Transverse colon (tissue), 4 donors: ENCODE measurements at regions of chr3 and their contacts with region 1.

Region 1: GRCh38 chr3:44510000-44510368 is 32.5 kb upstream of the ZNF445 start:
- DNase-seq: no peak
- H3K4me3 ChIP-seq: peak overlapping the region; percentile 59 to 97 (median 92)
- H3K27ac ChIP-seq: peak overlapping the region; percentile 89 to 96 (median 92)
- H3K4me1 ChIP-seq: peaks cover 6 to 27% (median 15%) of the 10 kb centered on the region in 4 donors
- H3K27me3 ChIP-seq: no peaks in the 10 kb centered on the region
- CTCF ChIP-seq: no peak
- EP300 ChIP-seq: no peak
- POLR2A ChIP-seq: no peak

Region 2: DNA sequence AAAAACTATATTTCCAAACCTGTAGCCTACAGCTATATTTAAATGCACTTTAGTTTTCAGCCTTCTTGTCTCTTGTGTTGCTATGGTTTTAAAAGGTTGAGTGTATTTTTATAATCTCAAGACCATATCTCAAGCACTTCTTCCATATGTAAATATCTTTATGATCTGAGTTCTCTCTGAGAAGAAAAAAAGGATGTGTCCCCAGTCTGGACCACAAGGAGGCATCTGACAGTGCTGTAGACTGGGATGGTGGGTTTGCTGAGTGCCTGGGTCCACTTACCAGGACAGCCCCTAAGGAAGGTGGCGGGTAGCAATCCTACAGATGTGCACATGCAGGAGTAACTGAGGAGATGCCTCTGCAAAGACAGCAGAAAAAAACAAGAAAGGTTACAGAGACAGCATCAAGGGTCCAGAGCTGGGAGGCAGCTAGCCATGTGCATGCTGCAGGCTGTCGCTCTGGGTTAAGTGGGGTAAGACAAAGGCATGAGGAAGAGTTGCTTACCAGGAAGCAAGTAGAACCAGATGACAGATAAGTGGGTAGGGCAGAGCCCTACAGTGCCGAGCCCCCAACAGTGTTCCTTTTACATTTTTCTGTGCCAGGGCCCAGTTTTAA is 1294.2 kb before region 1 on chr3:
- in situ Hi-C with region 1: no loop called
- intact Hi-C with region 1: no loop called
- DNase-seq: no peak
- H3K4me3 ChIP-seq: no peak overlapping the region
- H3K27ac ChIP-seq: no peak overlapping the region
- H3K4me1 ChIP-seq: no peaks in the 10 kb centered on the region
- H3K27me3 ChIP-seq: no peaks in the 10 kb centered on the region
- CTCF ChIP-seq: no peak
- EP300 ChIP-seq: no peak
- POLR2A ChIP-seq: no peak

Region 3: GRCh38 chr3:44477312-44478030 is 32.5 kb before region 1 on chr3 and contains the start of gene ZNF445:
- in situ Hi-C with region 1: no loop called
- intact Hi-C with region 1: loop called (anchors 5 kb)
- DNase-seq: peak; percentile 82
- H3K4me3 ChIP-seq: peak within 1 kb of the TSS; percentile 74 to 88 (median 81)
- H3K27ac ChIP-seq: peak within 1 kb of the TSS; percentile 81 to 87 (median 84)
- H3K4me1 ChIP-seq: peaks cover 5 to 29% (median 12%) of the 10 kb centered on the region in 4 donors
- H3K27me3 ChIP-seq: no peaks in the 10 kb centered on the region
- CTCF ChIP-seq: no peak
- EP300 ChIP-seq: no peak
- POLR2A ChIP-seq: no peak
- total RNA-seq, gene ZNF445: 6.8 to 12.7 (median 8.6) TPM

Region 4: DNA sequence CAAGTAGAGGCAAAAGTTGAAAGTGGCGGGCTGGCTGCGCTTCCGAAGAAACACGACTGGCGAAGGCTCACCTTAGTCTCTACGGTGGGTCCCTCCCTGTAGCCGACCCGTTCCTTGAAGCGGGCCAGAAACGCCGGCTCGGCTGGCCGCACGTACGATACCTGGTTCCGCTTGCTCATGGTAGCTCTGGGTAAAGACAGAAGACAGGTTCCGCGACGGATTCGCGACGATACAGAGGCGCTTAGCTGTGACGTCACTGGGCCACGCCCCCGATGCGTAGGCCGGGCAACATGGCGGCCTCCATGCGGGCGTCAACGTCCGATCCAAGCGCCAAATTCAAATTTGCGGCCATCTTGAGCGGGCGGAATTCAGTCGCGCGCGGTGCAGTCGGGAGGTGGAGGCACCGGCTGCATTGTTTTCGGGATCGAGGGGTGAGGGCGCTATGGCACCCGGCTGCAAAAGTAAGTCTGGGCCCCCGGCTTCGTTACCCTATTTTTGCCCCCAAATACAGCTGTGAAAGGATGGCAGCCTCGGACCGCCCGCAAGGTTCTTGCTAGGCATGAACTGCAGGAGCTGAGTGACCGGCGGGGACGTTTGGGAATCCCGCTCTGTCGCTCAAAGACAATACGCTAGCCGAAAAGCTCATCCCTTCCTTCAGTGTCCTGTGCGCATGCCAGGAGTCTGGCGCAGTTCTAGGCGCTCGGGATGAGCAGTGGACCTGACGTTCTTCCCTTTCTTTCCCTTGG is 251.6 kb after region 1 on chr3 and contains the starts of genes KIAA1143 and KIF15:
- in situ Hi-C with region 1: no loop called
- intact Hi-C with region 1: loop called (anchors 10 kb)
- DNase-seq: peak; percentile 98
- H3K4me3 ChIP-seq: peak within 1 kb of the TSS; percentile 61 to 95 (median 77)
- H3K27ac ChIP-seq: peak within 1 kb of the TSS; percentile 76 to 79 (median 78)
- H3K4me1 ChIP-seq: peaks cover 4 to 19% (median 13%) of the 10 kb centered on the region in 4 donors
- H3K27me3 ChIP-seq: no peaks in the 10 kb centered on the region
- CTCF ChIP-seq: no peak
- EP300 ChIP-seq: no peak
- POLR2A ChIP-seq: peak; percentile 67
- total RNA-seq, gene KIAA1143: 5.6 to 18.3 (median 13.7) TPM
- total RNA-seq, gene KIF15: 0.95 to 11.5 (median 0.96) TPM in 3 of 4 donors, not detected in the other